ENCODE measurements at regions of chr12 and their contacts with region 1.

Region 1: GRCh38 chr12:104958009-104958945 is at the start of gene SLC41A2:
- DNase-seq: peak; percentile 41 to 80 (median 68)
- H3K4me3 ChIP-seq: peak within 1 kb of the TSS; percentile 61 to 90 (median 82)
- H3K27ac ChIP-seq: peak within 1 kb of the TSS in 47 of 59 donors; percentile 24 to 89 (median 72)
- H3K27me3 ChIP-seq: no peaks in the 10 kb centered on the region
- CTCF ChIP-seq: peak in 8 of 56 donors; percentile 2 to 23 (median 8)
- total RNA-seq, gene SLC41A2: 22.4 to 73.3 (median 51.3) TPM

Region 2: DNA sequence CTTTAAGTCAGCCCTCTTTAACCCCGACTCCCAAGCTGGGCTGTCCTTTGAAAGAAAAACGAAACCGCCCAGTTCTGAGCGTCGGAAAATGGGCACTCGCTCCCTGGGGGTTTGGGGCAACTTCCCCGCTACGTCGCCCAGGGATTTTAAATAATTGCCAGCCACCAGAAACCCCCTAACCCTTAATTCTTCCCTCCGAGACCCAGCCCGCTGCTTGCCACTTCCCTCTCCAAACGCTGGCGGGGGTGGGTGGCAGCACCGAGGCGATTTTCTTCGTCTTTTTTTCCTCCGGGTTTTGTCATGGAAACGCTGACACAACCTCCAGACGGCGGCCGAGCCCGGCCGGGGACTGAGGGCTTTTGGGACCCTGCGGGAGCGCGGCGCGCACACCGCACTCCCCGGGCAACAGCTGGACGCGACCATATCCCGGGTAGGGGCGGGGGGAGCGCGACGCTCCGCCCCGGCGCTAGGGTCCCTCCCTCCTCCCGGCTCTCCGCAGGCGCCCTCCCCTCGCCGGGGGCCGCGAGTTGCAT is 501.8 kb before region 1 on chr12 and contains the start of gene CHST11:
- intact Hi-C with region 1: loop called in 1 of 2 experiments (anchors 5 kb)
- DNase-seq: peak; percentile 41 to 85 (median 76)
- H3K4me3 ChIP-seq: peak within 1 kb of the TSS; percentile 45 to 91 (median 81)
- H3K27ac ChIP-seq: peak within 1 kb of the TSS in 58 of 59 donors; percentile 30 to 91 (median 82)
- H3K27me3 ChIP-seq: peaks cover 0 to 13% (median 0%) of the 10 kb centered on the region in 45 donors
- CTCF ChIP-seq: peak in 45 of 56 donors; percentile 5 to 51 (median 36)
- total RNA-seq, gene CHST11: 14.8 to 77.6 (median 22.8) TPM